CD8-positive, alpha-beta memory T cell (primary cell): ENCODE measurements at regions of chr21 and their contacts with region 1.

Region 1: GRCh38 chr21:44065428-44065827 is 41.8 kb upstream of the PWP2 start:
- DNase-seq: peak; percentile 78 to 92 (median 87)
- H3K4me3 ChIP-seq: no peak overlapping the region
- H3K4me3 Mint-ChIP-seq: peak overlapping the region; percentile 7 to 86 (median 72)
- H3K27ac ChIP-seq: peak overlapping the region; percentile 68
- H3K27ac Mint-ChIP-seq: peak overlapping the region; percentile 93 to 100 (median 99)
- H3K4me1 ChIP-seq: peaks cover 22% of the 10 kb centered on the region
- H3K4me1 Mint-ChIP-seq: peaks cover 36 to 60% (median 47%) of the 10 kb centered on the region in 3 donors
- H3K27me3 ChIP-seq: no peaks in the 10 kb centered on the region
- H3K27me3 Mint-ChIP-seq: peaks cover 0 to 2% of the 10 kb centered on the region in 2 donors

Region 2: DNA sequence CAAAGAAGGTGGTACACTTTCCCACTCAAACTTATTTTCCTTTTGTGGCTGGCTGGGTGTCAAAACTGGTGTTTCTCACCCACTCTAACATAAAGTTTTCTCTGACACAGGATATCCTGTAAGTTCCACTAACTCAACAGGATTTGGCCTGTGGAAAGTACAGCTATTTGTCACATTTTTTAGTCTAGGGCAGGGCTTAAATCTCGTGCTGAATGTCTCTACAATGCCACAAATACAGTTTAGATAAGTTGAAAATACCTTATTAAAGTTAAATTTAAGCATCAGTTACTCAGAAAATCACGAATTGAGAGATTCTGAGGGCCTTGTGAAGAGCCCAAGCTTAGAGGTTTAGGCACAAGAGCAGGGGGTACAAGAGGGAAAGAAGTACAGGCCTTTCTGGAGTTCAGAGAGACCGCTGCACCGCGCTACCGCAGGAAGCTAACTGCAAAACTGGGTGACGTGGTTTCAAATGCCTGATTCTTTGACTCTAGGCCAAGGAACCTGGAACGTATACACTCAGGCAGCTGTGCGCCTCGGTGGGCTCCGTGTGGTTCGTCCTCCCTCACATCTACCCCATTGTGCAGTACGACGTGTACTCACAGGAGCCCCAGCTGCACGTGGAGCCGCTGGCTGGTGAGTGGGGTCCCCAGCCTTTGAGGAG is 18.3 kb after region 1 on chr21:
- CTCF ChIA-PET with region 1: interaction called, 7 read pairs
- POLR2A ChIA-PET with region 1: interaction called, 12 read pairs
- DNase-seq: peak; percentile 58 to 90 (median 83)
- H3K4me3 ChIP-seq: peak overlapping the region; percentile 24
- H3K4me3 Mint-ChIP-seq: peak overlapping the region; percentile 80 to 88 (median 84)
- H3K27ac ChIP-seq: peak overlapping the region; percentile 49
- H3K27ac Mint-ChIP-seq: peak overlapping the region; percentile 88 to 99 (median 98)
- H3K4me1 ChIP-seq: peaks cover 90% of the 10 kb centered on the region
- H3K4me1 Mint-ChIP-seq: peaks cover 88 to 98% (median 98%) of the 10 kb centered on the region in 3 donors
- H3K27me3 ChIP-seq: no peaks in the 10 kb centered on the region
- H3K27me3 Mint-ChIP-seq: no peaks in the 10 kb centered on the region

Region 3: DNA sequence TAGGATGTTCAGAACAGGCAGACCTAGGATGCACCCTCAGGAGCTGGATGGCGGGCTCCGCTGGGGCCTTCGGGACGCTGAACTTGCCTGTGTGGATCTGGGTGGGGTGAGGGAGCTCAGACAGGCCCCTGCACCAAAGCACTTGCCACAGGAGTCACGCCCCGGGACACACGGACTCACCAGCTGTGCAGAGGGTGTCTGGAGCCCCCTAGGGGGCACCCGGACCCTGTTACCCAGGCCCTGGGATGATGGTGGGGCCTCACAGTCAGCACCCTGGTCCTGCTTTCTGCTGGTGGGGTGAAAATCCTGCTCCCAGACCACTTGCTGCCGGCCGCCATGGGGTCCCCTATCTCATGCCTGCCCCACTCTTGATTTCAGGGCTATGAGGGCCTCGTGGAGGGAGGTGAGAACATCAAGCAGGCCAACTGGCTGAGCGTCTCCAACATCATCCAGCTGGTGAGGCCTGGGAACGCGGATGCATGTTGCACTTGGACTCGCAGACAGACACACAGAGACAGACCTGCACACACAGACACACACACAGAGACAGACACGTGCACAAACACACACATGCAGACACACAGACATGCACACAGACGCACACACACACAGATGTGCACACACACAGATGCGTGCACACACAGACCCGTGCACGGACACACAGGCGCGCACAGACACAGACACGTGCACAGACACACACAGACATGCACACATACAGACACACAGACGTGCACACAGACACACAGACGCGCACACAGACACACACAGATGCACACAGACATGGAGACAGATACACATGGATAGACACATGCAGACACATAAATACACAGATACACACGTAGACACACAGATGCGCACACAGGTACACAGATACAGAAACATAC is 245.4 kb after region 1 on chr21:
- CTCF ChIA-PET with region 1: no interaction called
- POLR2A ChIA-PET with region 1: no interaction called
- DNase-seq: no peak
- H3K4me3 ChIP-seq: no peak overlapping the region
- H3K4me3 Mint-ChIP-seq: peak overlapping the region in 1 of 7 donors; percentile 22
- H3K27ac ChIP-seq: no peak overlapping the region
- H3K27ac Mint-ChIP-seq: peak overlapping the region in 3 of 8 donors; percentile 8 to 70 (median 31)
- H3K4me1 ChIP-seq: no peaks in the 10 kb centered on the region
- H3K4me1 Mint-ChIP-seq: peaks cover 4 to 8% (median 7%) of the 10 kb centered on the region in 3 donors
- H3K27me3 ChIP-seq: no peaks in the 10 kb centered on the region
- H3K27me3 Mint-ChIP-seq: peaks cover 0 to 2% of the 10 kb centered on the region in 2 donors

Region 4: DNA sequence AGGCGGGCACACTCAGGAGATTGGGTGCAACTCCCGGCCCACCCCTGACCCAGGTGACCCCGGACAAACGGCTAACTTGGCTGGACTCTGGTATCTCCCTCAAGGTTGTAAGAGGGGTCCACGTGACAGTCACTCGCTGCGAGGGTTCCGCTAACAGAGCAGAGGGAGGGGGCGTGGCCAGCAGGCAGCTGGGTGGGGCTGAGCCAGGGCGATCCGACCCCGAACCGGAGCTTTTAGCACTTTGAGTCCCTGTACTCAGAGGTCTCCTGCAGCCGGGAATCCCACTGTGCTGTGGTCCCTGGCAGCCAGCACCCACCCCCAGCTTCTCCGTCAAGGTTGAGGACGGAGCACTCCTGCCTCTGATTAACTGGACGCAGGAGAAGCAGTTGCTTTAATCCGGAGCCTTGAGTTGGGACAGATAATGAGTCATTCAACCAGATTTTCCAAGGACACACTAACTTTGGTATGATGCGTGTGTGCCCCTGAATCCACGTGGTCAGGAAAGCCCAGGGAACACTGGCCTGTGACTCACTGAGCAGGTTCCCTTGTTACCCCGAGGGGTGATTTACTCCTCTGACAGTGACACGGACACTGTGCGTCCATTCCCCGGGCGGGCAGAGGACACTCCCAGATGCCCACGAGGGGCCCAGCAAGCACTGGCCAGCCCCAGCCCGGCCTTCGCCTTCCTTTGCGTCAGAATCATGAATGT is 304.8 kb after region 1 on chr21:
- CTCF ChIA-PET with region 1: no interaction called
- POLR2A ChIA-PET with region 1: no interaction called
- DNase-seq: peak in 1 of 5 donors; percentile 46
- H3K4me3 ChIP-seq: no peak overlapping the region
- H3K4me3 Mint-ChIP-seq: no peak overlapping the region
- H3K27ac ChIP-seq: no peak overlapping the region
- H3K27ac Mint-ChIP-seq: no peak overlapping the region
- H3K4me1 ChIP-seq: peaks cover 17% of the 10 kb centered on the region
- H3K4me1 Mint-ChIP-seq: peaks cover 15 to 18% (median 17%) of the 10 kb centered on the region in 3 donors
- H3K27me3 ChIP-seq: no peaks in the 10 kb centered on the region
- H3K27me3 Mint-ChIP-seq: peaks cover 0 to 3% of the 10 kb centered on the region in 2 donors